CD4-positive, alpha-beta memory T cell (primary cell): ENCODE measurements at regions of chr22 and their contacts with region 1.

Region 1: DNA sequence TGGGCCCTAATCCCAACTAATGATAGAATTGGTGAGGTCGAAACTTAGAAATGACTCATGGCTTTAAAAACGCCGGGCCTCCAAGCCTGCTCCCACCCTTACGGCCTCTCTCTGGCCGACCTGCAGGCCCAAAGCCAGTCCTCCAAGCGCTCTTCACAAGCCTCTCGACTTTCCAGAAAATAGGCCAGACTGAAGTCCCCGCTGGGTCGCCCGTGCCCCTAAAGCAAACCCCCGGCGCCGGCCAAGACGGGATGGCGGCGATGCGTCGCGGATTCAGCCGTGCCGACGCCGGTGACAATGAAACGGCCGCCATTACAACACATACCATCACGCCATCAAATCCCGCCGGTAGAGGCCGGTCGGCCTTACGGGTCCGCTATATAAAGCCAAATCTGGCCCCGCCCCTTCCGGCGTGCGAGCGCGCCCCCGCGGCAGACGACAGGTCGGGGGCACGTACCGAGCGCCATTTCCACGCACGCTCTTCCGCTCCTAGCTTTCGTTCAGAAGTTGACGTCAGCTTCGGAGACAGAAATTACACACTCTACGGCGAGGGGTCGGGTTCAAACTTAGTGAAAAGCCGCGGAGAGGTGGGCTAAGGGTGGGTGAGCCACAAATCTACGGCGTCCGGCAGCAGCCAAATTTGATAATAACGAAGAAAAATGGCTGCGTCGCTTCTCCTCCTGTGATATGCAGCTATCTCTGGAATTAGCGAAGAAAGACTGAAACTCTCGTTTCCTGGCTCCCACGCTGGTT is at the start of gene RPL3:
- DNase-seq: peak; percentile 97 to 98 (median 98)
- H3K4me3 ChIP-seq: peak within 1 kb of the TSS; percentile 87 to 97
- H3K4me3 Mint-ChIP-seq: peak within 1 kb of the TSS; percentile 98 to 100 (median 100)
- H3K27ac ChIP-seq: peak within 1 kb of the TSS; percentile 83
- H3K27ac Mint-ChIP-seq: peak within 1 kb of the TSS; percentile 98 to 99 (median 99)
- H3K4me1 ChIP-seq: peaks cover 44% of the 10 kb centered on the region
- H3K4me1 Mint-ChIP-seq: peaks cover 25 to 55% (median 43%) of the 10 kb centered on the region in 4 donors
- H3K27me3 ChIP-seq: no peaks in the 10 kb centered on the region
- H3K27me3 Mint-ChIP-seq: no peaks in the 10 kb centered on the region
- total RNA-seq, gene RPL3: 3,492 to 3,635 TPM

Region 2: DNA sequence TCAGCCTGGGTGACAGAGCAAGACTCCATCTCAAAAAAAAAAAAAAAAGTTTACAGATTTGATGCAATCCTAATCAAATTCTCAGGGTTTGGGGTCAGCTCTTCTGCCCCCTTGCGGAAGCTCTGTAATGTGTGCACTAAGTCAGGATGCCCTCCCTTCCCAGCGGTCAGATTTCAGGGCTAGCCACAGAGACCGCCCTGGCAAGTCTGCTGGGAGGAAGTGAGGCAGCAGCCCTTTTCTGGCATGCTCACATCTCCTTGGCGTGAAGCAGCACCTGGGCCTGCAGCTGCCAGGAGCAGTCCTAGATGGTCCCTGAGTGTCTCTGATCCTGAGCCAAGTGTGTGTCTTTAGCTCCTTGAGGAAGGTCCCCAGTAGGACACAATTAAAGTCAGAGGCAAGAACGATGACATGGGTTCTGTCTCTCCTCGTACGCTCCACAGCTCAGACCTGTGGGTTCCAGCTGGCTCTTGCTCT is 316.2 kb before region 1 on chr22:
- CTCF ChIA-PET with region 1: interaction called, 3 read pairs
- POLR2A ChIA-PET with region 1: interaction called, 4 read pairs
- intact Hi-C with region 1: loop called (anchors 2 kb)
- DNase-seq: peak; percentile 75 to 82 (median 76)
- H3K4me3 ChIP-seq: no peak overlapping the region
- H3K4me3 Mint-ChIP-seq: peak overlapping the region in 2 of 8 donors; percentile 5 to 8
- H3K27ac ChIP-seq: no peak overlapping the region
- H3K27ac Mint-ChIP-seq: peak overlapping the region; percentile 15 to 84 (median 60)
- H3K4me1 ChIP-seq: peaks cover 16% of the 10 kb centered on the region
- H3K4me1 Mint-ChIP-seq: peaks cover 8 to 14% (median 13%) of the 10 kb centered on the region in 4 donors
- H3K27me3 ChIP-seq: no peaks in the 10 kb centered on the region
- H3K27me3 Mint-ChIP-seq: no peaks in the 10 kb centered on the region

Region 3: DNA sequence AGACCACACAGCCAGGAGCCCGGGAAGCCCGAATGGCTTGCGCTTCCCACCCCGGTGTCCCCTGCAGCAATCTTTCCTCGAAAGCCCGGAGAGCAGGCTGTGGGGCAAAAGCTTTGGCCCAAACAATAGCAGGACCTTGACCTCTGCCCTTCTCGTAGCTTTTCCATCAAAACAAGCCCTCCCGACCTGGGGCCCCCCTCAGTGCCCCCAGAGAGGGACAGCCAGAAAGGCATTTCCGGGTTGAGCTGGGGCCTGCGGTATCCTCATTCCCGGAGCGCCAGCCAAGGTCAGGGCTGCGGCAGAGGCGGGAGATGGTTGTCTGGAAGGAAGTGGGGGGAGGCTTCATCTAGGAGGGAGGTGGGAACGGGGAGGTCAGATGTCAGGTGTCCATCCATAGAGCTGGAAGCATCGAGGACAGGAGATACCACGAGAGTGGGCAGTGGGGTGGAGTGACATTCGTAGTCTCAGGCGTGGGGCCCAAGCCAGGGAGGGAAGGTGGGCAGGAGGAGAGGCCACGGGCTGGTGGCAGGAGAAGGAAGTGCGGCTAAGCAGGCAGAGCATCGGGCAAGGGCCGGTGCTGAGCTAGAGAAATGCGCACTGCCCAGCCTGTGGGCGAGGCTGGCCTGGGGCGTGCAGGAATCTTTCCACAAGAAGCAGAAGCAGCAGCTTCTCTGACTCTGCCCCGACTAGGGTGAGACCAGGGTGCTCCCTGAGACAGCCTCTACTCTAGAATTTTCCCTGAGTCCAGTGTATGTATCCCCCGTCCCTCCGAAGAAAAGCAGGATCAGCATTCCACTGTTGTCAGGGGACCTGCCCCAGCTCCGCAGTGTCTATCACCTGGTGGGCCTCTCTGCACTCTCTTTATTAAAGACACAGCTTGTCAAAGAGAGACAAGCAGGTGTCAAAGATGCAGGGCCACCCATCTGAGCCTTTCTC is 88.9 kb before region 1 on chr22:
- CTCF ChIA-PET with region 1: interaction called, 5 read pairs
- POLR2A ChIA-PET with region 1: interaction called, 15 read pairs
- intact Hi-C with region 1: no loop called
- DNase-seq: no peak
- H3K4me3 ChIP-seq: no peak overlapping the region
- H3K4me3 Mint-ChIP-seq: no peak overlapping the region
- H3K27ac ChIP-seq: no peak overlapping the region
- H3K27ac Mint-ChIP-seq: peak overlapping the region in 4 of 7 donors; percentile 17 to 76 (median 34)
- H3K4me1 ChIP-seq: peaks cover 10% of the 10 kb centered on the region
- H3K4me1 Mint-ChIP-seq: peaks cover 2 to 14% (median 5%) of the 10 kb centered on the region in 4 donors
- H3K27me3 ChIP-seq: no peaks in the 10 kb centered on the region
- H3K27me3 Mint-ChIP-seq: peaks cover 0 to 11% of the 10 kb centered on the region in 2 donors

Region 4: DNA sequence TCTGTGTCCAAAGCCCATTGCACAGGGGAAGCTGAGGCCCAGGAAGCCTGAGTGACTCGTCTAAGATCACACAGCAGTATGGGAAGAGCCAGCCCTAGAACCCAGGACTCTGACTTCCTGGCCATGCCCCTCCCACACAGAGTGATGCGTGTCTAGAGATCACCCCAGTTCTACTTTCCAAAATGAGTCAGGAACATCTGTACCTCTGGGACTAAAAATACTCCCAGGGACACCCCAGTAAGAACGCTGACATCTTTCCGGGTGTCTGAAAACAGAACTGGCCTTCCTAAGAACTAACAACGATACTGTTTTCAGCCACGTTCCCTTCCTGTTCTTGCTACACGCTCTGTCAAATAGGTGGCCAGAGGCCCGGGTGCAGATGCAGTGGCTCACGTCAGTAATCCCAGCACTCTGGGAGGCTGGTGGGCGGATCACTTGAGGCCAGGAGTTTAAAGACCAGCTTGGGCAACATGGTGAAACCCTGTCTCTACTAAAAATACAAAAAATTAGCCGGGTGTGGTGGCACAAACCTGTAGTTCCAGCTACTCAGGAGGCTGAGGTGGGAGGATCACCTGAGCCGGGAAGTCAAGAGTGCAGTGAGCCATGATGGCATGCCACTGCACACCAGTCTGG is 52.9 kb before region 1 on chr22:
- CTCF ChIA-PET with region 1: no interaction called
- POLR2A ChIA-PET with region 1: no interaction called
- intact Hi-C with region 1: no loop called
- DNase-seq: peak in 1 of 5 donors; percentile 28
- H3K4me3 ChIP-seq: no peak overlapping the region
- H3K4me3 Mint-ChIP-seq: peak overlapping the region in 1 of 8 donors; percentile 2
- H3K27ac ChIP-seq: no peak overlapping the region
- H3K27ac Mint-ChIP-seq: peak overlapping the region in 2 of 7 donors; percentile 76 to 81
- H3K4me1 ChIP-seq: no peaks in the 10 kb centered on the region
- H3K4me1 Mint-ChIP-seq: peaks cover 0 to 5% (median 0%) of the 10 kb centered on the region in 4 donors
- H3K27me3 ChIP-seq: no peaks in the 10 kb centered on the region
- H3K27me3 Mint-ChIP-seq: no peaks in the 10 kb centered on the region

Region 5: DNA sequence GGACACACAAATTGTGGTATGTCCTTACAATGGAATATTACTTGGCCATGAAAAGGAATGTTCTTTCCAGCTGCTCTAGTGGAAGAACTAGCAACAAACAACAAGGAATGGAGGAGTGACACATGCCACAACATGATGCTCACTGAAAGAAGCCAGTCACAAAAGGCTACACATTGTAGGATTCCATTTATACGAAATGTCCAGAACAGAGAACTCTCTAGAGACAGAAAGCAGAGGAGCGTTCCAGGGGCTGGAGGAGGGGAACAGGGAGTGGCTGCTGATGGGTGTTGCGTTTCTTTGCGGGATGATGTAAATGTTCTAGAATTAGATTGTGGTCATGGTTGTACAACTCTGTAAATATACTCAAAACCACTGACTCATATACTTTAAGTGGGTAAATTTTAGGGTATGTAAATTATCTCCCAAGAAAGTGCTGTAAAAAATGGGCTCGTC is 42.3 kb before region 1 on chr22:
- CTCF ChIA-PET with region 1: no interaction called
- POLR2A ChIA-PET with region 1: no interaction called
- intact Hi-C with region 1: no loop called
- DNase-seq: no peak
- H3K4me3 ChIP-seq: no peak overlapping the region
- H3K4me3 Mint-ChIP-seq: no peak overlapping the region
- H3K27ac ChIP-seq: no peak overlapping the region
- H3K27ac Mint-ChIP-seq: no peak overlapping the region
- H3K4me1 ChIP-seq: no peaks in the 10 kb centered on the region
- H3K4me1 Mint-ChIP-seq: peaks cover 0 to 2% (median 0%) of the 10 kb centered on the region in 4 donors
- H3K27me3 ChIP-seq: no peaks in the 10 kb centered on the region
- H3K27me3 Mint-ChIP-seq: peaks cover 3 to 8% of the 10 kb centered on the region in 2 donors

Region 6: DNA sequence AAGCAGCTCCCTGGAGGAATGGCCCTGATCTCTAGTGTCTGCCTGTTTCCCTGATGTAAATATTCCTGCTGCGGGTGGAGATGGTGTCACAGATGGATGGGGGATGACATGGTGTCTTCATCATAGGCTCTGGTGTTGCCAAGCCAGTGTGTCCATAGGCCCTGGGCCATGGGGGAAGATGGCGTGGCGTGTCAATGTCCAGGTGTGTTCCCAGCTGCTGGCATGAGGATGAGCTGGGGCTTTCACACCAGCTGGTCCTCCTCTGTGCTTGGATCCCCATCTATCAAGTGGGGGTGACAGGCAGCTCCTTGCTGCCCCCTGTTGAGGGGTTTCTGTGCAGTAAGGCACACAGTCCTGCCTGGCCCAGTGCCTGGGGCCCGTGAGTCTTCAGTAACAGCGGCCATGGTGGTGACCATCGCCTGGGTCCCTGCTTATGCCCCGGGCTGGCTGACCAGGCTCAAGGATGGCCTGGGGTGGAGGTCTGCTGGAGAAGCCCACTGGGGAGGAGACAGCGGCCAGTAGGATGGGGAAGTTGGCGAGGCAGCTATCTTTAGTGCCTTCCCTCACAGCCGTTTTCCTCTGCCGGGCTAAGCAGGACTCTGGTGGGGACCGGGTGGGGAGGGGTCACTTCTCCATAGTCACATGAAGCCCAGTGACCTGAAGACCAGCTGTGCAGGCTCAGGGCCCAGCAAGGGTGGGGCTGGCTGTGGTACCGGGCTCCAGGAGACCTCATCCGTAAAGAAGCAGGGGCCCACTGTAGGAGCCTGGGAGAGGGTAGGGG is 12.7 kb before region 1 on chr22:
- CTCF ChIA-PET with region 1: interaction called, 16 read pairs
- POLR2A ChIA-PET with region 1: interaction called, 38 read pairs
- intact Hi-C with region 1: no loop called
- DNase-seq: peak in 4 of 5 donors; percentile 32 to 45 (median 42)
- H3K4me3 ChIP-seq: no peak overlapping the region
- H3K4me3 Mint-ChIP-seq: no peak overlapping the region
- H3K27ac ChIP-seq: no peak overlapping the region
- H3K27ac Mint-ChIP-seq: peak overlapping the region in 1 of 7 donors; percentile 16
- H3K4me1 ChIP-seq: peaks cover 12% of the 10 kb centered on the region
- H3K4me1 Mint-ChIP-seq: peaks cover 5 to 30% (median 12%) of the 10 kb centered on the region in 4 donors
- H3K27me3 ChIP-seq: no peaks in the 10 kb centered on the region
- H3K27me3 Mint-ChIP-seq: peaks cover 0 to 2% of the 10 kb centered on the region in 2 donors

Region 7: DNA sequence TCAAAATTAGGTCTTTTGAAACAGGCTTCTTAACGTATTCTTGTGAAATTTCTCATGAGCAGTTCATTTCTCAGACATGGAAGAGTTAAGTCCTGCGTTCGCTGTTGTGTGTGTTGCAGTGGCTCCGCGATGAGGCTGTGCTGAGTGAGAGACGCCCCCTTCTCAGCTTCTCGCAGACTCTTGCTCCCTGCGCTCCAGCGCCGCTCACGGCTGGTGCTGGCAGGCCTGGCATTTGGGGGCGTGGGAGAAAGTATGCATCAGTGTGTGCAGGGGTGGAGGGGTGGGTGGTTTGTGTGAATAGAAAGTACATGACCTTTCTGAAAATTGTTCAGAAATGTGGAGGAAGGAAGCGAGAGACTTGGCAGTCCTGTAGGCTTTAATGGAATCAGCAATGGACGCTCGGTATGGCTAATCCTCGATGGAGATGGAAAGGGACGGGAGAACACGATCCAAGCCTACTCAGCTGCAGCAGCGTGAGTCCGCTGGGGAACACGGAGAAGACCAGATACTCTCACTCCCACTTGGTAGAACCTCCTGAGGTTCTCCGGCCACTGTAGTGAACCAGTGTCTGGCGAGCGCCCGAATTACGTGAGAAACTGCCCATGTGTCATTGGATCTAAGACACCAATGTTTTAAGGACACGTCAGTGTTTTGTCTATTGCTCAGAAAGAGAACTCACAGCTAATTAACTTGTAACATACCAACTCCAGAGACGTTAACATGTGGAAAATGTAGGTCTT is 86.1 kb after region 1 on chr22:
- CTCF ChIA-PET with region 1: no interaction called
- POLR2A ChIA-PET with region 1: interaction called, 37 read pairs
- intact Hi-C with region 1: no loop called
- DNase-seq: no peak
- H3K4me3 ChIP-seq: no peak overlapping the region
- H3K4me3 Mint-ChIP-seq: peak overlapping the region in 1 of 8 donors; percentile 29
- H3K27ac ChIP-seq: no peak overlapping the region
- H3K27ac Mint-ChIP-seq: no peak overlapping the region
- H3K4me1 ChIP-seq: peaks cover 20% of the 10 kb centered on the region
- H3K4me1 Mint-ChIP-seq: peaks cover 29 to 57% (median 36%) of the 10 kb centered on the region in 4 donors
- H3K27me3 ChIP-seq: no peaks in the 10 kb centered on the region
- H3K27me3 Mint-ChIP-seq: no peaks in the 10 kb centered on the region

Region 8: DNA sequence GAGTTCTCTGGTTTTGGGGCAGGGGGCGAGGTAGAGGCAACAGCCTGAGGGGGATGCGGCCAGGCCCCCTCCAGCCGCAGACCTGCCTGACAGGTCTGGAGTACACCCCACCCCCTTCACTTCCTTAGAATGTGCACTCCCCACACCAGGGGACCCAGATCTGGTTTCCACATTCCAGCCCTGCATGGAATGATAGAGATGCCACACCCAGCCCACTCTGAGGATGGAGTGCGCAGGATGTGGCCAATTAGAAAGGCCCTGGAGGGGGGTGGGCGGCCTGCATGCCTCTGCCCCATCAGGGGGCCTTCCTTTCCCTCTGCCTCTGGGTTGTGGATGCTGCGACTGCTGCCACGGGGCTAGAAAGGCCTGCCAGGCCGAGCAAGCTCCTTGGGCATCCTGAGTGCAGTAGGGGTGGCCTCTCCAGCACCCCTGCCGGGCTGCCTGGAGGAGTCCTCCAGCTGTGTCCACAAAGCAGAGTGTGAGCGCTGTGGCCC is 109.2 kb after region 1 on chr22:
- CTCF ChIA-PET with region 1: no interaction called
- POLR2A ChIA-PET with region 1: no interaction called
- intact Hi-C with region 1: no loop called
- DNase-seq: no peak
- H3K4me3 ChIP-seq: no peak overlapping the region
- H3K4me3 Mint-ChIP-seq: no peak overlapping the region
- H3K27ac ChIP-seq: no peak overlapping the region
- H3K27ac Mint-ChIP-seq: no peak overlapping the region
- H3K4me1 ChIP-seq: no peaks in the 10 kb centered on the region
- H3K4me1 Mint-ChIP-seq: no peaks in the 10 kb centered on the region
- H3K27me3 ChIP-seq: no peaks in the 10 kb centered on the region
- H3K27me3 Mint-ChIP-seq: no peaks in the 10 kb centered on the region

Region 9: DNA sequence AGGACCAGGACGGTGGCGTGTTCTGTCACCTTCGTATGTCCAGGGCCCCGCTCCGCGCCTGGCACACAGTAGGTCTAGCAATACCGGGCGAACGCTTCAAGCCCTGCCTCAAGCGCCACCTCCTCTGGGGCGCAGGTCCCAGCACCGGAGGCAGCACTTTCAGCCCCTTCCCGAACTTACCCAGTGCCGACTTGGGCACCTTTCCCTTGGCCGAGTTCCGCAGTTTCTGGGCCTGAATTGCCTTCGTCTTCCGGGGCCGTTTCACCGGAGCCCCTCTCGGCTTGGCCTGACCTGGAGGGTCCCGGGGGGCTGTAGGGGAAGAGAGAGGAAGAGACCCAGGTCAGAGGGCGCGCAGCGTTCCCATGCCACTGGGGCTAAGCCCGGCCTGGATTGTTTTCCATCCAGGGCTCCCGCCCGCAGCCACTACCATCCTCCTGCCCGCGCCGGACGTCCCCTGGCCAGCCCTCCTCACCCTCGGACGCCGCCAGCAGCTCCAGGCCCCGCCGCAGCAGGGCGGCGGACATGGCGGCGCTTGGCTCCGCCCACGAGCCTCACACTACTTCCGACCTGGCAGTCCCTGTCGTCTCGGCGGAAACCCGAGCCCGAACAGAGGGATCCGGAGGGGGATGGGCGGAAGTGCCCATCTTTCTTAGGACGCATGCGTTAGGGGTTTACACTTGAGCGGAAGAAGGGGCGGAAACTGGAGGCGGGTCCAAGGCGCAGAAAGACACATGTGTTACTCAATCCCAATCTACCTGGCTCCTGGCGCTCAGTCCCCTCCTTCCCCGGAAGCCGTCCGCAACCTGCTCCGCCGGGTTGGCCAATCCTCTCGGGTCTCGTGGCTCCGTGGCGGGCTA is 213.0 kb after region 1 on chr22 and contains the start of gene RPS19BP1:
- CTCF ChIA-PET with region 1: interaction called, 20 read pairs
- POLR2A ChIA-PET with region 1: interaction called, 165 read pairs
- intact Hi-C with region 1: no loop called
- DNase-seq: peak; percentile 98 to 100 (median 99)
- H3K4me3 ChIP-seq: peak within 1 kb of the TSS; percentile 71 to 91
- H3K4me3 Mint-ChIP-seq: peak within 1 kb of the TSS; percentile 92 to 98 (median 96)
- H3K27ac ChIP-seq: peak within 1 kb of the TSS; percentile 93
- H3K27ac Mint-ChIP-seq: peak within 1 kb of the TSS; percentile 93 to 100 (median 97)
- H3K4me1 ChIP-seq: peaks cover 56% of the 10 kb centered on the region
- H3K4me1 Mint-ChIP-seq: peaks cover 35 to 61% (median 51%) of the 10 kb centered on the region in 4 donors
- H3K27me3 ChIP-seq: no peaks in the 10 kb centered on the region
- H3K27me3 Mint-ChIP-seq: no peaks in the 10 kb centered on the region
- total RNA-seq, gene RPS19BP1: 66.9 to 67.1 TPM